Stomach (tissue), 19 donors: ENCODE measurements at regions of chr4 and their contacts with region 1.

Region 1: DNA sequence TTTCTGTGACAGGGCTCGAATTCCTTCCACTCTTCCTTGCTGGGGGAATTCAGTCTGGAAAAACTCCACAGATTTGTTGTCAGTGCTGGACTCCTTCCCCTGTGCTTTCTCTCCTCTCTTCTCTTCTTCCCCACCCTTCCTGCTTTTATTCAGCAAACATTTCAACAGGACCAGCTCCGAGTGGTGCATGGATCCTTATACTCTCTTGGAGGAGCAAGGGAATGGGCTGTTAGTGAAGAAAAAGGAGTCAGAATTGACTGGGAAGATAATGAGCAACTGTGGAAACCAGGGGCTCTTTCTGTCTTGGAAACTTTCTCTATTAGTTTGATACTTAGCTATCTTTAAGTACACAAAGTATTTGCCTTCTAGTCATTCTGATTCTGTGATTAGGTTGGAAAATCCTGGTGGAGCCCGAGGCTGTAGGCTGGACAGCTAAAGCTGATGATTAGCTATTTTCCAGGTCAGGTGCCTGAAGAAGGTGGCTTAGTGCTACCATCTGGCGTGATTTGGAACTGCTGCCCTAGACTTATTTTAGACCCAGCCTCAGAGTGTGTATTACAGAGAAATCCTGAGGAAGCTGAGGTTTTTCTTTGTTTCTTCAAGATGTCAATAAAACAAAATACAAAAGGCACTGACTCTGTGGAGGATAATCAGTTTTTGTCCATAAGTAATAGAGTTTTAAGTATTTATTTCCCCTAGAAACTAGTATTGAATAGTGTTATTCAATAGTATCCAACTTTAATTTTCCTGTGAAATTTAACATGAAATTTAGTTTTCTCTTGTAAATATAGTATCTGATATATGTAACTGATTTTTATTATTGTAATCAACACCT is 38.4 kb downstream of the NAP1L5 start:
- DNase-seq: peak; percentile 64 to 83
- H3K4me3 ChIP-seq: no peak overlapping the region
- H3K27ac ChIP-seq: peak overlapping the region in 4 of 5 donors; percentile 30 to 56 (median 46)
- H3K4me1 ChIP-seq: peaks cover 0 to 20% (median 9%) of the 10 kb centered on the region in 4 donors
- H3K27me3 ChIP-seq: no peaks in the 10 kb centered on the region
- CTCF ChIP-seq: peak in 5 of 7 experiments; percentile 74 to 84 (median 79)
- EP300 ChIP-seq: no peak
- POLR2A ChIP-seq: no peak

Region 2: GRCh38 chr4:87624698-87625097 is 1034.6 kb before region 1 on chr4:
- intact Hi-C with region 1: no loop called
- DNase-seq: no peak
- H3K4me3 ChIP-seq: no peak overlapping the region
- H3K27ac ChIP-seq: no peak overlapping the region
- H3K4me1 ChIP-seq: no peaks in the 10 kb centered on the region
- H3K27me3 ChIP-seq: no peaks in the 10 kb centered on the region
- CTCF ChIP-seq: no peak
- EP300 ChIP-seq: no peak
- POLR2A ChIP-seq: no peak

Region 3: GRCh38 chr4:88523325-88524129 is 135.7 kb before region 1 on chr4 and contains the start of gene PYURF:
- intact Hi-C with region 1: no loop called
- DNase-seq: peak; percentile 97
- H3K4me3 ChIP-seq: peak within 1 kb of the TSS; percentile 77 to 90 (median 84)
- H3K27ac ChIP-seq: peak within 1 kb of the TSS; percentile 77 to 95 (median 93)
- H3K4me1 ChIP-seq: peaks cover 9 to 44% (median 25%) of the 10 kb centered on the region in 4 donors
- H3K27me3 ChIP-seq: no peaks in the 10 kb centered on the region
- CTCF ChIP-seq: no peak
- EP300 ChIP-seq: no peak
- POLR2A ChIP-seq: peak in 2 of 4 donors; percentile 12 to 37
- total RNA-seq, gene PYURF: 11.7 to 296 (median 97.1) TPM

Region 4: GRCh38 chr4:88533937-88534750 is 125.1 kb before region 1 on chr4:
- intact Hi-C with region 1: loop called (anchors 10 kb)
- DNase-seq: no peak
- H3K4me3 ChIP-seq: no peak overlapping the region
- H3K27ac ChIP-seq: peak overlapping the region in 1 of 5 donors; percentile 18
- H3K4me1 ChIP-seq: peaks cover 0 to 3% (median 2%) of the 10 kb centered on the region in 4 donors
- H3K27me3 ChIP-seq: no peaks in the 10 kb centered on the region
- CTCF ChIP-seq: no peak
- EP300 ChIP-seq: no peak
- POLR2A ChIP-seq: no peak